ENCODE measurements at regions of chr6 and their contacts with region 1.

Region 1: DNA sequence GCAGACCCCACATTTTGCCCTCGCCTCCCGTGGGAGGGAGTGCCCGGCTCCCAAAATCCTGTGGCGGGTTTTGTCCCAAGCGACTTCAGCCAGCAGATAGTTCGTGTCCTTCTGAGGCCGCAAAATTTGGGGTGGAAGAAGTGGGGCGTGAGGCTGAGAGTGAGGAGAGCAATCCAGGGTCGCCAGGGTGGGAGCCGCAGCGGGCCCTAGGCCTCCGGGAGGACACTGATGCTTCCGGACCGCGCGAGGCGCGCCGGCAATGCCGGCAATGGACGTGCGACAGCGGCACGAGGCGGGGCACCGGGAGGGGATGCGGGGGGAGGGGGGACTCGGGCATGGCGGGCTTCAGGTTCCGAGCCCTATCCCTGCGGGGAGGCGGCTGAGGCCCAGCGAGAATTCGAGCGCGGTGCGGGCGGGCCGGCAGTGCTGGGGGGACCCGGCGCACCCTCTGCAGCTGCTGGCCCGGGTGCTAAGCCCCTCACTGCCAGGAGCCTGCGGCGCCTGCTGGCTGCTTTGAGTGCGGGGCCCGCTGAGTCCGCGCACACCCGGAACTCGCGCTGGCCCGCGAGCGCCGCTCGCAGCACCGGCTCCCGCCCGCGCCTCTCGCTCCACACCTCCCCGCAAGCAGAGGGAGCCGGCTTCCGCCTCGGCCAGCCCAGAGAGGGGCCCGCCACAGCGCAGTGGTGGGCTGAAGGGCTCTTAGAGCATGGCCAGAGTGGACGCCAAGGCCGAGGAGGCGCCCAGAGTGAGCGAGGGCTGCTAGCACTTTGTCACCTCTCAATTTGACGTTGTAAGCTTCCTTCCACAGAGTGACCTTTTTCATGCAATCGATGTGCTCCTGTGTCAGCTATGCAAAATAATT is 143.8 kb downstream of the LPA start:
- DNase-seq: peak; percentile 80
- H3K4me3 Mint-ChIP-seq: peak overlapping the region; percentile 88
- H3K27ac Mint-ChIP-seq: peak overlapping the region; percentile 81
- H3K4me1 Mint-ChIP-seq: peaks cover 26% of the 10 kb centered on the region
- H3K27me3 Mint-ChIP-seq: peaks cover 54% of the 10 kb centered on the region

Region 2: GRCh38 chr6:160507420-160507819 is 12.9 kb before region 1 on chr6:
- CTCF ChIA-PET with region 1: interaction called, 12 read pairs
- DNase-seq: no peak
- H3K4me3 Mint-ChIP-seq: no peak overlapping the region
- H3K27ac Mint-ChIP-seq: no peak overlapping the region
- H3K4me1 Mint-ChIP-seq: no peaks in the 10 kb centered on the region
- H3K27me3 Mint-ChIP-seq: peaks cover 14% of the 10 kb centered on the region

Region 3: DNA sequence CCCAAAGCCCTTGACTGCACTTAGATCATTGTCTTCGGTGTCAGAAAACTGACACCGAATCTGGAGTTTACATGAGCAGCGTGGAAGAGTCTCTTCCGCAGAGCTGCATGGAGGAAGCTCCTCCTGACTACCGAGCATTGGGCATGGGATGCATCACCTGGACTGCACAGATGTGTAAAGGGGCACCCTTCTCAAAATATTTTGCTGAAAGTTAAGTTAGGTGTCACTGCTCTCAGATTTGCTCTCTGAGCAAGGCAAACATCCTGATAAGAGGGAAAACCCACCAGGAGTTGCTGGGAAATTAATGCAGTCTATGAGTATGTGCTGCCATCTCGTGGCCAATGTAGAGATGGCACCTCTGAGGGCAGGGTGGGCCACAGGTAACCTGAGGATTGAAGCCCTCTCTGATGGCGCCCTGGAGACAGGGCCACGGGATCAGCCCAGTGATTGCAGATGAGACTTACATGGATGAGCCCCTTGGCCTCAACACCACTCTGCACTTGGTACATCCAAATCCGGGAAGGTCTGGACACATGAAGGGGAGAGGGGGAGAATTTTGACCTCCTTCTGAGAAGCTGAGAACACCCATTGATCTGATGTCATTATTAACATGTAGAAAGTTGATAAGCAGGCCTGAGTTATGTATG is 13.9 kb after region 1 on chr6:
- CTCF ChIA-PET with region 1: interaction called, 23 read pairs
- DNase-seq: peak; percentile 67
- H3K4me3 Mint-ChIP-seq: no peak overlapping the region
- H3K27ac Mint-ChIP-seq: no peak overlapping the region
- H3K4me1 Mint-ChIP-seq: no peaks in the 10 kb centered on the region
- H3K27me3 Mint-ChIP-seq: peaks cover 22% of the 10 kb centered on the region